Activated CD8-positive, alpha-beta T cell treated with anti-CD3 and anti-CD28 coated beads for 36 hours (primary cell): ENCODE measurements at regions of chr14 and their contacts with region 1.

Region 1: DNA sequence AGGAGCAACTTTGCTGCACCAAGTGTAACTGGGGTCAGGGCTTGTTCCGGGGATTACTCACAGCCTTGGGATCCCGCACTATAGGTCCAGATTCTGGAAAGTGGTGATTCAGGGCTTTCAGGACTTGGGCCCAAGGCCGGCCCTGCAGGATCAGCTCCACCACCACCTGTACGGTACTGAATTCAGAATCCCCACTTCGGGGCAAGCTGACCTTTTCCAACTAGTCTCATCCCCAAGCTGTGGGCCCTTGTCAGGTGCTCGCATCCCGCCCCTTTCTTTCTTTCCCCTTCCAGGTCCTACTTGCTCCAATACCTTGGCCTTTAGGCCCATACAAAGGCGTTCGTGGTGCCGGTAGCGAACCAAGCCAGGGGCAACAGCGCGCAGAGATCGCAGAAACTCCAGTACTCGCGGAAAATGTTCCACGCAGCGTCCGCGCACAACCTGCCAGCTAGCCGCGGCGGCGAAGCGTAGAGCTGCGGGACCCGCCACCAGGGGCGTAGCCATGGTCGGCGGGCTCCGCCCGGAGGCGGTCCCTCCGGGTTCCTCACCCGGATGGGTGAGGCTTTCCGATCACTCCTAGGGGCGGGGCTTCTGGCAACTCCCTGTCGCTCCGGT is 487 bp downstream of the TINF2 start:
- DNase-seq: peak; percentile 93
- ATAC-seq: peak; percentile 84
- H3K4me3 Mint-ChIP-seq: peak overlapping the region; percentile 96
- H3K27ac Mint-ChIP-seq: peak overlapping the region; percentile 98
- H3K4me1 Mint-ChIP-seq: peaks cover 54% of the 10 kb centered on the region
- H3K27me3 Mint-ChIP-seq: no peaks in the 10 kb centered on the region
- CTCF ChIP-seq: no peak

Region 2: DNA sequence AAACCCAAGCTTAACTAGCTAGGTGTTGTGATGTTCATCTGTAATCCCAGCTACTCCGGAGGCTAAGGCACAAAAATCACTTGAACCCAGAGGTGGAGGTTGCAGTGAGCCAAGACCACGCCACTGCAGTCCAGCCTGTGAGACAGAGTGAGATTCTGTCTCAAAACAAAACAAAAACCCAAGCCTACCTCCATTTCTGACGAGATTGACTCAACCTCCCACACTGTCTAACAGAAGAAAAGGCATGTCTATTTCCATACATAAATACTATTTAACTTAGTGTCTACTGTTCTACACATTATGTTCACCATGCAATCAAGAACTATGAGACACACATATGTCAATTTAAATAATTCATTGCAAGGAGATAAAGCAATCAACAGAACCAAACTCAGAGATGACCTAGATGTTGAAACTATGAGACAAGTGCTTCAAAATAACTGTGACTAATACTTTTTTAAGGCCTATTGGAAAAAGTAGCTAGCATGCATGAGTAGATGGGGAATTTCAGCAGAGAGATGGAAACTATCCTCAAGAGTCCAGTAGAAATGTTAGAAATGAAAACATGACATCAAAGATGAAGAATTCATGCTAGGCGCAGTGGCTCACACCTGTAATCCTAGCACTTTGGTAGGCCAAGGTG is 364.3 kb before region 1 on chr14:
- CTCF ChIA-PET with region 1: no interaction called
- POLR2A ChIA-PET with region 1: no interaction called
- intact Hi-C with region 1: no loop called
- DNase-seq: peak; percentile 16
- ATAC-seq: peak; percentile 68
- H3K4me3 Mint-ChIP-seq: no peak overlapping the region
- H3K27ac Mint-ChIP-seq: peak overlapping the region; percentile 58
- H3K4me1 Mint-ChIP-seq: peaks cover 3% of the 10 kb centered on the region
- H3K27me3 Mint-ChIP-seq: peaks cover 6% of the 10 kb centered on the region
- CTCF ChIP-seq: no peak

Region 3: DNA sequence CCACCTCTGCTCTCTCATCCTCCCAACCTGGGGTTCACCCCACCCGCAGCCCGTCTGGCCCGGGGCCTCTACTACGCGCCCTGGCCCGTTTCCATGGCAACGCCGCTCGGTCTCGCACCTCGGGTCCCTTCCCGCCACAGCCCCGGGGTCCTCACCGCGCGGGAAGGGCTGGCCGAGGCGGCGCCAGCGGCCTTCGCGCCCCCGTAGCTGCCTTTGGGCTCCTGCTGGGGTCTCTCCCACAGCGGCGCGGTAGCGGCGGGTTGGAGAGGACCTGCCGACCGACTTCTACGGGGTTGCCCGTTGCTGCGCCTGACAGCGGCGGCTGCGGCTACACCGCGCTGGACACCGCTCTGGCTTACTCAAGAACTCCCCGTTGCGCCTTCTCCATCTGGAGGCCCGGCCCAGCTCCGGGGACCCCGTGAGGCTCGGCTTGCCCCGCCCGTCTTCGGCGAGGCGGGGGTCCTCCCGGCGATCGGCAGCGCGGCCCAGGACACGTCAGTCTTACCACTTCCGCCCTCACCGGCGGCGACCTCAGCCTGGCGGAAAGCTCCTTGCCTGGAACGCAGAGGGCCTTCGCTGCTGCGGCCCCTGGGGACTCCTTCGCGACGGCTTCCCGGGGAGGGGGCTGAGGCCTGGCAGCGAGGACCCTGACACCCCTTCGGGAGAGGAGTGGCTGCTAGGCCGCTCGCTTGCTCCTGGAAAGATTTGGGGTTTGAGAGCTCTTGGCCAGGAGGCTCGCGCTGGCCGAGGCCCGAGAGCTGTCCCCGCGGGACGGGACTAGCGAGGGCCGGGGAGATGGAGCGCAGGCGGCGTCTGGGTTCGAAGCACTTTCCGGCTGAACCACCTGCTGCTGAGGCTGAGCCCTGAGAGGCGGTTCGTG is 46.5 kb before region 1 on chr14 and contains the start of gene TM9SF1:
- CTCF ChIA-PET with region 1: interaction called, 3 read pairs
- POLR2A ChIA-PET with region 1: interaction called, 11 read pairs
- intact Hi-C with region 1: no loop called
- DNase-seq: peak; percentile 91
- ATAC-seq: peak; percentile 90
- H3K4me3 Mint-ChIP-seq: peak within 1 kb of the TSS; percentile 95
- H3K27ac Mint-ChIP-seq: peak within 1 kb of the TSS; percentile 98
- H3K4me1 Mint-ChIP-seq: peaks cover 50% of the 10 kb centered on the region
- H3K27me3 Mint-ChIP-seq: no peaks in the 10 kb centered on the region
- CTCF ChIP-seq: no peak
- total RNA-seq, gene TM9SF1: 16.3 to 18.0 TPM

Region 4: DNA sequence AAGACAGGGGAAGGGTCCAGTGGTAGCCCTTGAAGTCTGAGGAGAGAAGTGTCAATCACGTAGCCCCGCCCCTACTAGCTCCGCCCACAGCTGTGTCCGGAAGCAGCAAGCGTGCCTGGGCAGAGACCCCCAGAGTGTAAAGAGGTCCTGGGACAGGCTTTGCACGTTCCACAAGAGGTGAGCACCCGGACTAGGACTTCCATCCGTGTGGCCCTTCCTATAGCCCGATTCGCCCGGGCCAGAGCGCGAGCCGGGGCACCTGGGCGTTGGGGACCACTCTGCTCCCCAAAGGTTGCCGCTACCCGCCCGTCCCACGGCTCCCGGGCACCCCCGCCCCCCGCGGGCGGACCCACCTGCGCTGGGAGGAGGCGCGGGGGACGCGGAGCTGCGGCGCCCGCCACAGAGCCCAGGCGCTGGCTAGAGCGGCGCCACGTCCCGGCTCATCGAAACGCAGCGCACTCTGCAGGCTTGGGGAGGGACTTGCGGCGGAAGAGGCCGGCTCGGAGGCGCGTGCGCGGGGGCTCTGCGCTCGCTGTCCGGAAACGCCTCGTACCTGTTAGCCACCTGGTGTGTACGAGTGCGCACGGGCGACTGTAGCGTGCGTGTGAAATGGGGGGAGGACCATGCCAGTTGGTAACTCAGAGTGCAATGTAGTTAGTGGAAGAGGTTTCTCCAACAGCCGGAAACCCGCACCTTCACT is 29.3 kb after region 1 on chr14 and contains the start of gene RABGGTA:
- CTCF ChIA-PET with region 1: interaction called, 66 read pairs
- POLR2A ChIA-PET with region 1: interaction called, 18 read pairs
- intact Hi-C with region 1: loop called (anchors 2 kb)
- DNase-seq: peak; percentile 92
- ATAC-seq: peak; percentile 85
- H3K4me3 Mint-ChIP-seq: peak within 1 kb of the TSS; percentile 82
- H3K27ac Mint-ChIP-seq: peak within 1 kb of the TSS; percentile 94
- H3K4me1 Mint-ChIP-seq: peaks cover 39% of the 10 kb centered on the region
- H3K27me3 Mint-ChIP-seq: no peaks in the 10 kb centered on the region
- CTCF ChIP-seq: peak; percentile 77
- total RNA-seq, gene RABGGTA: 37.6 to 42.7 TPM

Region 5: GRCh38 chr14:24289649-24290249 is 47.8 kb after region 1 on chr14:
- CTCF ChIA-PET with region 1: interaction called, 873 read pairs
- POLR2A ChIA-PET with region 1: interaction called, 17 read pairs
- intact Hi-C with region 1: no loop called
- DNase-seq: peak; percentile 91
- ATAC-seq: peak; percentile 96
- H3K4me3 Mint-ChIP-seq: no peak overlapping the region
- H3K27ac Mint-ChIP-seq: peak overlapping the region; percentile 40
- H3K4me1 Mint-ChIP-seq: peaks cover 21% of the 10 kb centered on the region
- H3K27me3 Mint-ChIP-seq: no peaks in the 10 kb centered on the region
- CTCF ChIP-seq: no peak

Region 6: GRCh38 chr14:24310646-24311604 is 69.0 kb after region 1 on chr14 and contains the start of gene LTB4R:
- CTCF ChIA-PET with region 1: interaction called, 873 read pairs
- POLR2A ChIA-PET with region 1: interaction called, 19 read pairs
- intact Hi-C with region 1: no loop called
- DNase-seq: peak; percentile 74
- ATAC-seq: peak; percentile 87
- H3K4me3 Mint-ChIP-seq: peak within 1 kb of the TSS; percentile 58
- H3K27ac Mint-ChIP-seq: peak within 1 kb of the TSS; percentile 81
- H3K4me1 Mint-ChIP-seq: peaks cover 66% of the 10 kb centered on the region
- H3K27me3 Mint-ChIP-seq: no peaks in the 10 kb centered on the region
- CTCF ChIP-seq: peak; percentile 63
- total RNA-seq, gene LTB4R: 11.6 to 11.7 TPM